Activated CD8-positive, alpha-beta T cell treated with anti-CD3 and anti-CD28 coated beads, Interleukin-2, amount 10 ng/mL, durations not matched to agents 7 days and 5 days (primary cell): ENCODE measurements at regions of chr15 and their contacts with region 1.

Region 1: DNA sequence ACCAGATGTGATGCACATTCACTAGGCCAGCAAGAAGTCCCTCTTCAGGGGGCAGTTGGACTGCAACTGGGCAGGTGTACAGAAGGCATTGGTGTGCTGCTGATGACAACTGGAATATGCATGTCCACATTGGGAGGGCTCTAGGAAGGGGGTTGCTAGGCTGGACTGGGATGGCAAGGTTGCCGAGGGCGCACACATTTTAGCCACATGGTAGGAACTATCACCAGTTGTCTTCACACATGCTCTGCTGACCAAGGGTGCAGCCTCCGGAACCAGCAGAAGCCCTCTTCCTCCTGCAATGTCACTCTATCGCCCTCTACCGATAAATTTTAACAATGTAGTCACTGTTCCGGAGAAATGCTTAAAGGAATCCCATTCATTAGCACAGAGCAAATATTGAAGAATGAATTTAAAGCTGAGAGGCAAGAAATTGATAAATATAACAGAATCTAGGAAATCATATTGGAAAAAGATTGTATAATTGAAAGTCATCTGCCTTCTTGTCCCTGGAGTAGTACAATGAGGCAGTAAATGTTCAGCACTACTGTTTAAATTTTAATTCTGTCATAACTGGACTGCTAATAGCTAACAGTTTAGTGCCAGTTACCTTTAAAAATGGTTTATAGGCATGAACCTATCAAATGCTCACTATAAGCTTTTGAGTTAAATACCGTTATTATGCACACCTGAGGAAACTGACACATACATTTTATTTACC is 22.6 kb upstream of the LYSMD4 start:
- DNase-seq: peak; percentile 58
- ATAC-seq: peak; percentile 88
- H3K4me3 Mint-ChIP-seq: no peak overlapping the region
- H3K27ac Mint-ChIP-seq: no peak overlapping the region
- H3K4me1 Mint-ChIP-seq: peaks cover 7% of the 10 kb centered on the region
- H3K27me3 Mint-ChIP-seq: peaks cover 11% of the 10 kb centered on the region

Region 2: DNA sequence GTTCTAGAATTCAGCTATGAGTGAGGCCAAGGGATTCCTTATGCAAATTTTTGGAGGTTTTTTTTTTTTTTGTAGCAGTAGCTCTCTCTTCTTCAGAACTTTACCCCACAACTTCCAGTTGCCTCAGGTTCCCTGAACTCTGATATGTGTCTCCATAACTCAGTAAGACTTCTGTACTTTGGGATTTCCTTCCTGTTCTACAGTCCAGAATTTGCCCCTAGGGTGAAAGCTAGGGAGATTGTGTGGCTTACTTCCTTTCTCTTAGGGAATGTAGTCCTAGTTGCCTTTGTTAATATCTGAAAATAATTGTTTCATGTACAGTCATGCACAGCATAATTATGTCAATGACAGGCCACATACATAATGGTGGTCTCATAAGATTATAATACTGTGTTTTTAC is 473.7 kb before region 1 on chr15:
- CTCF ChIA-PET with region 1: interaction called, 10 read pairs
- POLR2A ChIA-PET with region 1: no interaction called
- DNase-seq: no peak
- ATAC-seq: no peak
- H3K4me3 Mint-ChIP-seq: no peak overlapping the region
- H3K27ac Mint-ChIP-seq: no peak overlapping the region
- H3K4me1 Mint-ChIP-seq: peaks cover 23% of the 10 kb centered on the region
- H3K27me3 Mint-ChIP-seq: no peaks in the 10 kb centered on the region

Region 3: DNA sequence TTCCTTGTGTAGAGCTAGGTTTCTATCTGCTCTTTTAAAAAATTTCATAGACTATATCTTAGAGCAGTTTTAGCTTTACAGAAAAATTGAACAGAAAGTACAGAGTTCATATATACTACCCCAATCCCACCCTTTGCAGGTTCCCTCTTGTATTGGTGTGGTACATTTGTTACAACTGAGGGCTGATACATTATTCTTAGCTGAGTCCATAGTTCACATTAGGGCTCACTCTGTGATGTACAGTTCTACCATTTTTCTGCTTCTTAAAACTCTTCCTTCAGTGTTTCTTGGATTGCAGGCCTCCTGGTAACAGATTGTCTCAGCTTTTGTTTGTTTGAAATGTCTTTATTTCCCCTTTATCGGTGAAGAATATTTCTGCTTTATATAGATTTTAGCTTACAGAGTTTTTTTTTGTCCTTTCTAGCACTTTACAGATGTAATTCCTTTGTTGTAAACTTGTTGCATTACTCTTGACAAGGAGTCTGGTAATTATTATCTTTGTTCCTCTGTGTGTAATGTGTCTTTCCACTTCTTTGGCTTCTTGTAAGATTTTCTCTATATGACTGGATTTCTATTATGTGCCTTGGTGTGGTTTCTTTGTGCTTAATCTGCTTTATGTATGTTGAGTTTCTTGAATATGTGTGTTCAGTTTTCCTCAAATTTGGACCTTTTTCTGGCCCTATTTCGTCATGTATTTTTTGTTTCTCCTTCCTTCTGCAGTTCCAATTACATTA is 164.8 kb before region 1 on chr15:
- CTCF ChIA-PET with region 1: no interaction called
- POLR2A ChIA-PET with region 1: no interaction called
- DNase-seq: no peak
- ATAC-seq: no peak
- H3K4me3 Mint-ChIP-seq: no peak overlapping the region
- H3K27ac Mint-ChIP-seq: no peak overlapping the region
- H3K4me1 Mint-ChIP-seq: peaks cover 15% of the 10 kb centered on the region
- H3K27me3 Mint-ChIP-seq: no peaks in the 10 kb centered on the region

Region 4: DNA sequence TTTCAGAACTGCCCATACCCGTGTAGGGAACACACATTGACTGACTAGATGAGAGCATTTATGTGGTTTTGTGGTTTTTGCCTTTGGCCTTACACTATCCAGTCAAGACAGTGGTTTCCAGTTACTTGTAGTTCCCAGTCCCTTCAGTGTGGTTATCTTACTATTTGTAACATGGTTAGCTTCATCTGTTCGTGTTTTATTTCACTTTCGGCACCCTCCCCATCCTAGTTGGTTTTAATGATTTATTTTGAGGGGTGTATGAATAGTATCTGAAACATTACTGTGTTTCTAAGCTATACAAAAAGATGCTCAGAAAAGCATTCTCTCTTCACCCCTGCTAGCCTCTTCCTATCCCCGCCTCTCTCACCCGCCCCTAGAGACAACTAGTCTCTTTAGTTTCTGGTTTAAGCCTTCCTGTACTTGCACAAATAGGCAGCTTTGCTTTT is 36.7 kb before region 1 on chr15:
- CTCF ChIA-PET with region 1: interaction called, 13 read pairs
- POLR2A ChIA-PET with region 1: no interaction called
- DNase-seq: no peak
- ATAC-seq: no peak
- H3K4me3 Mint-ChIP-seq: no peak overlapping the region
- H3K27ac Mint-ChIP-seq: peak overlapping the region; percentile 9
- H3K4me1 Mint-ChIP-seq: peaks cover 37% of the 10 kb centered on the region
- H3K27me3 Mint-ChIP-seq: no peaks in the 10 kb centered on the region

Region 5: DNA sequence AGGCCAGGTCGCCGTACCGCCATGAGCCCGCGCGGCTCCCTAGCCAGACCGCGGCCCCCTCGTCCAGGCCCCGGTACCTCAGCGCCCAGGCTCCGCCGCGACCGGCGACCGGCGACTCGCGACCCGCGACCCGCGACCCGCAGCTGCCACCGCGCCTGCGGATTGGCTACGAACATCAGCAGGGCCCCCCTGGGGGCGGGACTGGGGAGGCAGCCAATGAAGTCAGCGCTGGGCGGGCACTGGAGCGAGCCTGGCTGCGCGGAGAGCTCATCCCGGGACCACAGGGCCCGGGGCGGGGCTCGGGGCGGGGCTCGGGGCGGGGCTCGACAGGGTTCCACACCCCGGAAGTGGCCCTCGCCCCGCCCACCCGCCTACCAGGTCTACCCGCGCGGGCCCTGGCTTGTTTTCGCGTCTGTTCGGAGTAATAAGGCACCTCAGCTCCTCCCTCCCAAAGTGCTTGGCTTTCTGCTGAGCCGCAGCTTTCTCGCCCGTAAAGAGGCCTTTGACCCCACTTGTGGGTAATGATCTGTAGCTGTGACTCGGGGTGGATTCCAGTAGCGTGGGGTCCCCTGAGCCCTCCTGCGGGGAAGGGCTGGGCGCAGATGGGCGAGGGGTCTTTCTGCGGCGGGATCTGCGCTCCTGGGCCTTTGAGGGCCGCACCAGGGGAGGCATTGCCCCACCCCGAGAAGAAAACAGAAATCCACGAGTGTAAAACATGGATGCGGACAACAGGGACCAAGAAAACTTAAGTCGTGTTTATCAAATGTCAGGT is 22.4 kb before region 1 on chr15 and contains the start of gene LYSMD4:
- CTCF ChIA-PET with region 1: interaction called, 37 read pairs
- POLR2A ChIA-PET with region 1: interaction called, 8 read pairs
- DNase-seq: peak; percentile 99
- ATAC-seq: peak; percentile 100
- H3K4me3 Mint-ChIP-seq: peak within 1 kb of the TSS; percentile 77
- H3K27ac Mint-ChIP-seq: peak within 1 kb of the TSS; percentile 90
- H3K4me1 Mint-ChIP-seq: peaks cover 23% of the 10 kb centered on the region
- H3K27me3 Mint-ChIP-seq: no peaks in the 10 kb centered on the region
- total RNA-seq, gene LYSMD4: 8.9 to 13.0 TPM